Naive thymus-derived CD4-positive, alpha-beta T cell (primary cell): ENCODE measurements at regions of chr6 and their contacts with region 1.

Region 1: DNA sequence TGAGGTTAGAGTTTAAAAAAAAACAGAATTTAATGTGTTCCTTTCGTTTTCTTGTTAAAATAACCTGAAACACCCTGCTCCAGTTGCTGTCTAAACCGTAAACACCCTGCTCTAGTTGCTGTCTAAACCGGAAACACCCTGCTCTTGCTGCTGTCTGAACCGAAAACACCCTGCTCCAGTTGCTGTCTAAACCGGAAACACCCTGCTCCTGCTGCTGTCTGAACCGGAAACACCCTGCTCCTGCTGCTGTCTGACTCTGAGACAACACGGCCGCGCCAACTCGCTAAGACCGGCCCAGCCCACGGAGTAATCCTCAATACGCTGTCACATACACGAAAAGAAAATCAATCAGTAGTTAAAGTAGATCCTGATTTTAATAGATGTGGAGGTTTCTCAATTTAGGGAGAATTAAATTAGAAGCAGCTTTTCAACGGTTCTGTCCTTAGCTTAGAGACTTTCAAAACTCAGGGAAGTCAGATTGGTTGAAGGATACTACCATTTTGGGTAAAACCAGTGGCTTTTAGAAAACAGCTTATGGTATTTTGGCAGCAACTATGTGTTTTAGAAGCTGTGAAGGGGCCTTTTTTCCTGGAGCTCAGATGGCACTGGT is 98.3 kb downstream of the RAMACL start:
- DNase-seq: peak; percentile 37 to 90 (median 86)
- ATAC-seq: peak; percentile 94
- H3K4me3 ChIP-seq: peak overlapping the region; percentile 20
- H3K4me3 Mint-ChIP-seq: peak overlapping the region; percentile 43 to 84 (median 78)
- H3K27ac ChIP-seq: peak overlapping the region; percentile 79
- H3K27ac Mint-ChIP-seq: peak overlapping the region; percentile 93 to 98 (median 96)
- H3K4me1 ChIP-seq: peaks cover 17 to 18% of the 10 kb centered on the region in 2 donors
- H3K4me1 Mint-ChIP-seq: peaks cover 9 to 35% (median 27%) of the 10 kb centered on the region in 7 donors
- H3K27me3 ChIP-seq: no peaks in the 10 kb centered on the region
- H3K27me3 Mint-ChIP-seq: no peaks in the 10 kb centered on the region

Region 2: DNA sequence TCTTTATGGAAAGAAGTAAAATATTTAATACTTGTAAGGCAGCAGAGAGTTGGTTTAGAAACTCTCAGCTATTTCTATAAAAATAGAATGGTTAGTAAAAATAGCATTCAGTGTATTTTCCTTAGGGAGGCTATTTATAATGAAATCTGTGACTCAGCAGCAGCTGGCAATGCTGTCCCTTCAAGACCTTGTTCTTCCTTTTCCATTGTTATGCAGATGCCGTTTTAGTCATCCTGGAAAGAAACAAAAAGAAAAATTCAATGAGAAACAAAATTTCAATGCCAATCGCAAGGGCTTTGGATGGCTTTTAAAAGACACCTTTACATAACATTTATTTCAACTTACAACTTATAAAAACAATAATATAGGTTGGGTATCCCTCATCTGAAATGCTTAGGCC is 123.0 kb before region 1 on chr6:
- CTCF ChIA-PET with region 1: no interaction called
- POLR2A ChIA-PET with region 1: no interaction called
- intact Hi-C with region 1: no loop called
- DNase-seq: no peak
- ATAC-seq: no peak
- H3K4me3 ChIP-seq: no peak overlapping the region
- H3K4me3 Mint-ChIP-seq: no peak overlapping the region
- H3K27ac ChIP-seq: no peak overlapping the region
- H3K27ac Mint-ChIP-seq: no peak overlapping the region
- H3K4me1 ChIP-seq: no peaks in the 10 kb centered on the region
- H3K4me1 Mint-ChIP-seq: no peaks in the 10 kb centered on the region
- H3K27me3 ChIP-seq: no peaks in the 10 kb centered on the region
- H3K27me3 Mint-ChIP-seq: peaks cover 0 to under 1% (median 0%) of the 10 kb centered on the region in 5 donors

Region 3: GRCh38 chr6:166411721-166412151 is 76.4 kb before region 1 on chr6:
- CTCF ChIA-PET with region 1: interaction called, 3 read pairs
- POLR2A ChIA-PET with region 1: interaction called, 13 read pairs
- intact Hi-C with region 1: no loop called
- DNase-seq: peak in 6 of 9 donors; percentile 45 to 59 (median 52)
- ATAC-seq: peak; percentile 60
- H3K4me3 ChIP-seq: peak overlapping the region; percentile 47
- H3K4me3 Mint-ChIP-seq: peak overlapping the region; percentile 63 to 97 (median 85)
- H3K27ac ChIP-seq: peak overlapping the region; percentile 56
- H3K27ac Mint-ChIP-seq: peak overlapping the region; percentile 78 to 97 (median 94)
- H3K4me1 ChIP-seq: peaks cover 60% of the 10 kb centered on the region in 2 donors
- H3K4me1 Mint-ChIP-seq: peaks cover 51 to 74% (median 68%) of the 10 kb centered on the region in 7 donors
- H3K27me3 ChIP-seq: no peaks in the 10 kb centered on the region
- H3K27me3 Mint-ChIP-seq: peaks cover 0 to 11% (median 0%) of the 10 kb centered on the region in 5 donors

Region 4: GRCh38 chr6:166456395-166457156 is 31.6 kb before region 1 on chr6:
- CTCF ChIA-PET with region 1: no interaction called
- POLR2A ChIA-PET with region 1: no interaction called
- intact Hi-C with region 1: loop called in 1 of 2 experiments (anchors 1 kb)
- DNase-seq: peak in 2 of 9 donors; percentile 18 to 33
- ATAC-seq: peak; percentile 16
- H3K4me3 ChIP-seq: no peak overlapping the region
- H3K4me3 Mint-ChIP-seq: no peak overlapping the region
- H3K27ac ChIP-seq: no peak overlapping the region
- H3K27ac Mint-ChIP-seq: peak overlapping the region in 1 of 9 donors; percentile 84
- H3K4me1 ChIP-seq: no peaks in the 10 kb centered on the region
- H3K4me1 Mint-ChIP-seq: peaks cover 0 to 5% (median 0%) of the 10 kb centered on the region in 7 donors
- H3K27me3 ChIP-seq: no peaks in the 10 kb centered on the region
- H3K27me3 Mint-ChIP-seq: no peaks in the 10 kb centered on the region